A673 (cell line): ENCODE measurements at regions of chr14 and their contacts with region 1.

Region 1: DNA sequence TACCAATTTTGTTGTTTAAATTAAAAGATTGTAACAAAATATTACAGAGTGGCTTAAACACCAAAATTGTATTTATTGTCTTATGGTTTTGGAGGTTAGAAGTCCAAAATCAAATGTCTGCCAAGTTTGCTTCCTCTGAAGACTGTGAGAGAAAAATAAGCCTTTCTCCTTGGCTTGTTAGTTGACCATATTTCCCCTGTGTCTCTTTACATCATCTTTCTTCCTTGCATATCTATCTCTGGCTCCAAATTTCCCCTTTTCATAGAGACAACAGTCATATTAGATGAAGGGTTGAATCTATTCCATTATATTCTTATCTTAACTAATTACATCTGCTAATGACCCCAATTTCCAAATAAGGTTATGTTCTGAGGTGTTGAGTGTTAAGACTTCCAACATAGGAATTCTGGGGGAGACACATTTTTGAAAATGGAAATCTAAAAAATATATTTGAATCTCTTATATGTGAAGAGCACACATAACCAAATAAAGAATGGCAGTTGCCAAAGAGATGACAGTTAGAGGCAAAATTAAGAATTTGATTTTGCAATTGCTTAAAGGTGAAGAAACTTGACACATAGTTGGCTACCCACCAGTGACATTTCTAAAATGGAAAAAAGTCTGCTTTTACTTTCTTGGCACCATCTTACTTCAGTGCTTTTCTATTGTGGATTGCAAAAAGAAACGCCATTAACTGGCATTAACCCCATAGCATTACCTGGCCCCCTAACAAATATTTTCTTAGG is 407.2 kb downstream of the FSCB start:
- DNase-seq: no peak
- H3K4me3 ChIP-seq: no peak overlapping the region
- H3K27ac ChIP-seq: no peak overlapping the region
- H3K4me1 ChIP-seq: peaks cover 8% of the 10 kb centered on the region
- H3K27me3 ChIP-seq: no peaks in the 10 kb centered on the region
- CTCF ChIP-seq: no peak

Region 2: GRCh38 chr14:43949400-43949799 is 150.5 kb before region 1 on chr14:
- CTCF ChIA-PET with region 1: no interaction called
- POLR2A ChIA-PET with region 1: no interaction called
- intact Hi-C with region 1: no loop called
- DNase-seq: no peak
- H3K4me3 ChIP-seq: no peak overlapping the region
- H3K27ac ChIP-seq: no peak overlapping the region
- H3K4me1 ChIP-seq: no peaks in the 10 kb centered on the region
- H3K27me3 ChIP-seq: no peaks in the 10 kb centered on the region
- CTCF ChIP-seq: no peak

Region 3: DNA sequence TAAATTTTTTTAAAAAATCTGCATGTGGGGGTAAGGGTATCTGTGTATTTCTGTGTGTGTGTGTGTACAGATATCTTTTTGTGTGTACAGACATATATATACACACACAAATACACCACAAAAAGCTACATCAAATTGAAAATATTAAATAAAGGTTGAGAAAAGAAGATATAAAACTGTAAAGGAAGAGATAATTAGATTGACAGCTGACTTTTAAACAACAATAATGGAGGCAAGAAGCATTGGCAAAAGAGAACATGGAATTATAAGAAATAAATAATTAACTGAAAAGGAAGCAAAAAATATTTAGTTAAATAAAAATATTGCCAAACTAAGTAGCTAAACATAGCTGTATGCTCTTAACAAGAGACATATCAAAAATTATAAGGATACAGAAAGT is 115.7 kb after region 1 on chr14:
- CTCF ChIA-PET with region 1: no interaction called
- POLR2A ChIA-PET with region 1: no interaction called
- intact Hi-C with region 1: loop called (anchors 2 kb)
- DNase-seq: no peak
- H3K4me3 ChIP-seq: no peak overlapping the region
- H3K27ac ChIP-seq: no peak overlapping the region
- H3K4me1 ChIP-seq: peaks cover 9% of the 10 kb centered on the region
- H3K27me3 ChIP-seq: no peaks in the 10 kb centered on the region
- CTCF ChIP-seq: no peak